Natural killer cell (primary cell): ENCODE measurements at regions of chr1 and their contacts with region 1.

Region 1: DNA sequence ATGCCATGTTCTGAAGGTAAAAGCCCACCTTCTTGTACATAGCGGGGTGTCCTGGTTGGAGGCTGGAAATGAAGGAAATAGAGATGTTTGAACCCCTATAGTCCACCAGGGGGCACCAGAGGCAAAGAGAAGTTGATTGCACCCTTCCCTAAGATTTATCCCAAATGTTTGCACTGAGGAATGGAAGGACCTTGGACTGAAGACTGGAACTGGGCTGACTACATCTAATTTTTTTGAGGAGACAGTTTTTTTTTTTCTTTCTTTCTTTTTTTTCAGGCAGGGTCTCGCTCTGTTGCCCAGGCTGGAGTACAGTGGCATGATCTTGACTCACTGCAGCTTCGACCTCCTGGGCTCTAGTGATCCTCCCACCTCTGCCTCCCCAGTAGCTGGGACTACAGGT is 55.3 kb upstream of the EIF4G3 start:
- DNase-seq: peak in 1 of 2 donors; percentile 76
- ATAC-seq: peak; percentile 71 to 74 (median 71)
- H3K4me3 ChIP-seq: no peak overlapping the region
- H3K4me3 Mint-ChIP-seq: no peak overlapping the region
- H3K27ac ChIP-seq: no peak overlapping the region
- H3K27ac Mint-ChIP-seq: no peak overlapping the region
- H3K4me1 ChIP-seq: no peaks in the 10 kb centered on the region
- H3K4me1 Mint-ChIP-seq: no peaks in the 10 kb centered on the region
- H3K27me3 ChIP-seq: no peaks in the 10 kb centered on the region
- H3K27me3 Mint-ChIP-seq: no peaks in the 10 kb centered on the region
- CTCF ChIP-seq: peak; percentile 94

Region 2: GRCh38 chr1:21302747-21303715 is 71.0 kb after region 1 on chr1:
- intact Hi-C with region 1: no loop called
- DNase-seq: no peak
- ATAC-seq: no peak
- H3K4me3 ChIP-seq: no peak overlapping the region
- H3K4me3 Mint-ChIP-seq: no peak overlapping the region
- H3K27ac ChIP-seq: no peak overlapping the region
- H3K27ac Mint-ChIP-seq: peak overlapping the region in 1 of 2 donors; percentile 65
- H3K4me1 ChIP-seq: peaks cover 39% of the 10 kb centered on the region
- H3K4me1 Mint-ChIP-seq: peaks cover 34 to 48% of the 10 kb centered on the region in 2 donors
- H3K27me3 ChIP-seq: no peaks in the 10 kb centered on the region
- H3K27me3 Mint-ChIP-seq: no peaks in the 10 kb centered on the region
- CTCF ChIP-seq: no peak

Region 3: DNA sequence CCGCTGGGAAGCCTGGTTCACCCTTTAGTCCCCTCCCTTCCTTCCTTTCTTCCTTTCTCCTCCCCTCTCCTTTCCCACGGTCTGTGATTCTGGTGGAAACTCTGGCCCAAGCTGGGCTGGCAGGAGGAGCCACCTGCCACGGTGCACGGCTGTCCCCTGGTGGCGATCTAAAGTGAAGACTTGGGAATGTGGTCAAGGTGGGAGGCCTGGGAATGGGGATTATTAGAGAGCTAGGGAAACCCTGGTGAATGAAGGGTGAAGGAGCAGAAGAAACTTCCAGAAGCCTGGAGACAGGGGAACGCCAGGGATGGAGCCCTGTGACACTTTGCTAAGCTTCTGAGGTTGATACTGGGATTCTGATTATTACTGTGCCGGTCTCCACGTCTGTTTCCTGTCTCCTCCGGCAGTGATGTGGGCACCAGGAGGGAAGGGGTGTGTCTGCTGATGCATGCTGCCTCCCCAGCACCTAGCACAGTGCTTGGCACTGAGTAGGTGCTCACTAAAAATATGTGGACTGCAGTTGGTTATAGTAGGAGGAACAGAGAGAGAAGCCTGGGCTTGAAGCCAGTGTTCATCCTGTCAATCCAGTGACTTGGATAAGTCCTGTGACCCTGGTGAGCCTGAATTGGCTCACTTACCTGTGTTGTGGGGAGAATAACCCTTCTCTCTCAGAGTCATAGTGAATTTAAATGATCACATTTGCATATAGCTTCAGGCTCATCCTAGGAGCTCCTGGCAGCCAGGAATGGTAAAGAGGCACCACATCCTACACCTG is 136.7 kb after region 1 on chr1:
- intact Hi-C with region 1: loop called (anchors 1 kb)
- DNase-seq: peak; percentile 63 to 83
- ATAC-seq: peak; percentile 64 to 84 (median 80)
- H3K4me3 ChIP-seq: no peak overlapping the region
- H3K4me3 Mint-ChIP-seq: no peak overlapping the region
- H3K27ac ChIP-seq: no peak overlapping the region
- H3K27ac Mint-ChIP-seq: peak overlapping the region in 1 of 2 donors; percentile 7
- H3K4me1 ChIP-seq: peaks cover 6% of the 10 kb centered on the region
- H3K4me1 Mint-ChIP-seq: peaks cover 7 to 13% of the 10 kb centered on the region in 2 donors
- H3K27me3 ChIP-seq: no peaks in the 10 kb centered on the region
- H3K27me3 Mint-ChIP-seq: peaks cover 0 to 4% of the 10 kb centered on the region in 2 donors
- CTCF ChIP-seq: peak; percentile 99

Region 4: DNA sequence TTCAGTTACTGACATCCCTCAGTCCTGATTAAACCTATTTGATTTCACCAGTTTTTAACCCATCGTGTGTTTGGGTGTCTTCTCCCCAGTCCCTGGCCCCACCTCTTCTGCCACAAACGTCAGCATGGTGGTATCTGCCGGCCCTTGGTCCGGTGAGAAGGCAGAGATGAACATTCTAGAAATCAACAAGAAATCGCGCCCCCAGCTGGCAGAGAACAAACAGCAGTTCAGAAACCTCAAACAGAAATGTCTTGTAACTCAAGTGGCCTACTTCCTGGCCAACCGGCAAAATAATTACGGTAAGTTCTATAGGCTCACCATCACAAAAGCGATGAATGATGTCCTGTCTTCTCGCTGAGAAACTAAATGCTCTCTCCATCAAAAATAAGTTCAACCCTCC is 236.6 kb after region 1 on chr1:
- intact Hi-C with region 1: loop called (anchors 5 kb)
- DNase-seq: peak in 1 of 2 donors; percentile 35
- ATAC-seq: no peak
- H3K4me3 ChIP-seq: no peak overlapping the region
- H3K4me3 Mint-ChIP-seq: no peak overlapping the region
- H3K27ac ChIP-seq: no peak overlapping the region
- H3K27ac Mint-ChIP-seq: no peak overlapping the region
- H3K4me1 ChIP-seq: no peaks in the 10 kb centered on the region
- H3K4me1 Mint-ChIP-seq: no peaks in the 10 kb centered on the region
- H3K27me3 ChIP-seq: no peaks in the 10 kb centered on the region
- H3K27me3 Mint-ChIP-seq: no peaks in the 10 kb centered on the region
- CTCF ChIP-seq: peak; percentile 17

Region 5: GRCh38 chr1:21814241-21814918 is 582.3 kb after region 1 on chr1:
- intact Hi-C with region 1: no loop called
- DNase-seq: peak; percentile 42 to 47
- ATAC-seq: peak; percentile 77 to 80 (median 79)
- H3K4me3 ChIP-seq: peak overlapping the region; percentile 14
- H3K4me3 Mint-ChIP-seq: peak overlapping the region; percentile 63
- H3K27ac ChIP-seq: peak overlapping the region; percentile 41
- H3K27ac Mint-ChIP-seq: peak overlapping the region in 1 of 2 donors; percentile 73
- H3K4me1 ChIP-seq: peaks cover 24% of the 10 kb centered on the region
- H3K4me1 Mint-ChIP-seq: peaks cover 0 to 24% of the 10 kb centered on the region in 2 donors
- H3K27me3 ChIP-seq: no peaks in the 10 kb centered on the region
- H3K27me3 Mint-ChIP-seq: peaks cover 0 to 3% of the 10 kb centered on the region in 2 donors
- CTCF ChIP-seq: peak; percentile 76